Cardiac septum (tissue), 1 donor: ENCODE measurements at regions of chr6 and their contacts with region 1.

Region 1: GRCh38 chr6:152552616-152553209 is 84.4 kb downstream of the SYNE1 start:
- DNase-seq: peak; percentile 86

Region 2: GRCh38 chr6:152587473-152587872 is 34.8 kb after region 1 on chr6:
- intact Hi-C with region 1: loop called (anchors 2 kb)
- DNase-seq: no peak

Region 3: GRCh38 chr6:152642989-152643388 is 90.3 kb after region 1 on chr6:
- intact Hi-C with region 1: loop called (anchors 1 kb)
- DNase-seq: peak; percentile 84